ENCODE measurements at regions of chr4 and their contacts with region 1.

Region 1: GRCh38 chr4:124334119-124334518 is 378.4 kb downstream of the ANKRD50 start:
- DNase-seq: no peak
- ATAC-seq: peak; percentile 70 to 85

Region 2: DNA sequence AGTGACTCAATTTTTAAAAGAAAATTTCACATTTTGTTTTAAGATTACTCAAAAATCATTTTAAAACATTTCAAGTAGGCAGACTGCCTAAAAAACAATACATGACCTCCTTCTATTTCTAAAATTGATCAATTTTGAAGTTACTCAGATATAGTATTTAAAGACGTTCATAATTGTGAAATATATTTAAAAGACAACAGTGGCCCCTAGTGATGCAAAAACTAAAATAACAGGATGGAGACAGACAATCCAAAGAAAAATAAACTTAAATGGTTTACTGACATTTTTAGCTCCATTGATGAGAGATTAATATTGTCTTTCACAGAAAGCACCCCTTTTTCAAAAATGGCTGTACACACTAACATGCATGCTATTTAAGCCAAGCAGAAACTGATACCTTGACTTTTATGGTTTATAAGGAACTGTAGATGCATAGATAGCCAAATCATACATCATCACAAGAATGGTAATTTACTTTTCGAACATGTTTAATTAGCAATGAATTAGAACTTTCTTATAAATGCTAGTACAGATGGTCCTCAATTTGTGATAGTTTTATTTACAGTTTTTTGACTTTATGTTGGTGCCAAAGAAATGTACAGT is 910.8 kb after region 1 on chr4:
- intact Hi-C with region 1: loop called (anchors 2 to 5 kb)
- DNase-seq: no peak
- ATAC-seq: no peak

Region 3: DNA sequence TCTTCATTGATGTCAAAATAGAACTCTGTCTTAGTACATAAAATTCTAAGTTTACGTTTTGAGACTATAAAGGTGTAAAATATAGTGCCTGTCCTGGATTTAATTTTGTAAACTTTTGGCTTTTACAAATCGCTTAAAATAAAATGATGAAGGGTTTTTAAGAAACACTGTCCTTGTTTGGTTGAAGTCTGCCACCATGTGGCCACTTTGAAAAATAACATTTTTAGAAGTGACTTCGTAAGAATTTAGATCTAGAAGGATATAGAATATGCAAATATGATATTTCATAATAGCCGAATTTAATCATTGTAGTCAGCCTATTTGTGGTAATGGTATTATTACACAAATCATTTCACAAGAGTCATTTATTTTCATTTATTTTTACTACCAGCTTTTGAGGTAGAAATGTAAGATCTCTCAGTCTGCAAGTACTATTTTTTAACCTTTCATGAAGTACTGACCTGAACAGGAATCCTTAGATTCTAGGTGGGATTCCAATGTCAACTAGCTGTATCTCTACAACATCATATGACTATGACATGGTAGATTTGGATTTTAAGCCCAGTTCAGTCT is 949.7 kb after region 1 on chr4:
- intact Hi-C with region 1: loop called in 1 of 2 experiments (anchors 10 kb)
- DNase-seq: no peak
- ATAC-seq: no peak

Measured in left cardiac atrium (tissue), 4 donors.